CD14-positive monocyte (primary cell): ENCODE measurements at regions of chr1 and their contacts with region 1.

Region 1: GRCh38 chr1:156500797-156501499 is 373 bp upstream of the MEF2D start:
- DNase-seq: peak; percentile 90 to 96 (median 95)
- H3K4me3 ChIP-seq: peak overlapping the region; percentile 55 to 99 (median 96)
- H3K4me3 Mint-ChIP-seq: peak overlapping the region; percentile 93 to 97
- H3K27ac ChIP-seq: peak overlapping the region; percentile 94 to 98
- H3K27ac Mint-ChIP-seq: peak overlapping the region; percentile 95 to 100 (median 99)
- H3K4me1 ChIP-seq: peaks cover 76 to 83% of the 10 kb centered on the region in 2 donors
- H3K4me1 Mint-ChIP-seq: peaks cover 69% of the 10 kb centered on the region
- H3K27me3 ChIP-seq: no peaks in the 10 kb centered on the region
- H3K27me3 Mint-ChIP-seq: no peaks in the 10 kb centered on the region
- CTCF ChIP-seq: peak; percentile 49

Region 2: DNA sequence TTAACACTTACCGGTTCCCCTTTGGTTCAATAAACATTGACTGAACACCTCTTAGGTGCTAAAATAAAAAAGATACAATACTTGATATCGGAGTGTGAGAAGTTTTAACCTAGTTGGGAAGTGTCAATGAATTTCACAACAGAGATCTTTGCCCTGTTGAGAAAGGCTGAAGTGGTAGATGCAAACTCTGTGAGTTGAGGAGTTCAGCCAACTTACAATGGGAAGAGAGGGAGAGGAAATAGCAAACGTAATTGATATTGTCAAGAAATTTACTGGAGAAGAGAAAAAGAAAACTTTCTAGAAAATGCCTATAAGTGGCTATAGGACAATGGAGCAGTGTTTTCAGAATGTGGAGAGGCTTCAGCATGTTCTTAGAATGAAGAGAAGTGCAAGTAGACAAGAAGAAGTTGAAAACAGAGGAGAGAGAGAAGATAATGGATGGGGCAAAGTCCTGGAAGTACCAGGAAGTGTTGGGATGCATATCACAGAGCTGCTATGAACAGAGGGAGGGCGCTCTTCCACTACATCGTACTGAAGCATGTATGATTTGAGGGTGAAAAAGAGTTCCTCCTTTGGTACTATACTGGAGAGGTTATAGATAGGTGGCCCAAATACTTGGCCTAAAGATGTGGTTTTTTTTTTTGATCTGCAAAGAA is 49.3 kb before region 1 on chr1:
- intact Hi-C with region 1: loop called in 1 of 2 experiments (anchors 5 kb)
- DNase-seq: no peak
- H3K4me3 ChIP-seq: no peak overlapping the region
- H3K4me3 Mint-ChIP-seq: no peak overlapping the region
- H3K27ac ChIP-seq: no peak overlapping the region
- H3K27ac Mint-ChIP-seq: peak overlapping the region in 3 of 7 donors; percentile 6 to 69 (median 18)
- H3K4me1 ChIP-seq: peaks cover 33 to 41% of the 10 kb centered on the region in 2 donors
- H3K4me1 Mint-ChIP-seq: peaks cover 37% of the 10 kb centered on the region
- H3K27me3 ChIP-seq: no peaks in the 10 kb centered on the region
- H3K27me3 Mint-ChIP-seq: peaks cover 8 to 17% (median 9%) of the 10 kb centered on the region in 3 donors
- CTCF ChIP-seq: no peak

Region 3: DNA sequence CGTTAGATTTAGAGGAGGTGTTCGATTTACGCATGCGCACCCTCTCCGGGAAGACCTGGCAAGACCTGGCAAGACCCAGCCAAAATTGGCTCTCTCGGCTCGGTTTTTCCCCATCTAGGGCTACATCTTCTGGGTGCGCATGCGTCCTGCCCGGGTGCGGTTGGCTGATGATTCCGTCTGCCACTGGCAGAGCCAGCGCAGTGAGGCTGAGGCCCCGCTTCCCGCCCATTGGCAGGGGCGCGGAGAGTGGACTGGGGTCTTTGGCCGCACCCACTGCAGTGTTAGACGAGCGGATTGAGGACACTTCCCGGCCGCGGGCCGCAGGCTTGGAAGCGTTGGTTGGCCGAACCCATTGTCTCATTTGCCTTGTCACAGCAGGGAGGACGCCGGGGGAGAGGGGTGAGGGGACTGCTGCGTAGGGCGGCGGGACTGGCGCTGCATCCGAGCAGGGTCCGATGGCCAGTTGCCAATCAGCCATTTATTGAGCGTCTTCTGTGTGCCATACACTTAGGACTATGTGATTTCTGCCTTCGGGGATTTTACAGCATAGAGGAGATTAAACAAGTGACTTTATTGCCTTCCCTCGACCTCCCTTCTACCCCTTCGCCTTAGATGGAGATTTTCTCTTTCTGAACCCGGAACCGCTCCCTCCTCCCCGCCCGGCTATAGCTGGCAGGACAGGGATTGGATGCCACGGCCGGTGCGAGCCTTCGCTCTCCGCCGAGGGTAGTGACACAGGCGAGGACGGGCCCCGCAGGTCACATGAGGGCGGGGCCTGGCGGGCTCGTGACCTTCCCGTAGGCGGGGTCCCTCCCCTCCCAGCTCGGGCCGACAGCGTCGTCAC is 44.1 kb before region 1 on chr1:
- intact Hi-C with region 1: loop called in 1 of 2 experiments (anchors 5 kb)
- DNase-seq: peak; percentile 98 to 99 (median 99)
- H3K4me3 ChIP-seq: peak overlapping the region; percentile 63 to 89 (median 78)
- H3K4me3 Mint-ChIP-seq: peak overlapping the region; percentile 85 to 92
- H3K27ac ChIP-seq: peak overlapping the region; percentile 99
- H3K27ac Mint-ChIP-seq: peak overlapping the region; percentile 99 to 100 (median 99)
- H3K4me1 ChIP-seq: peaks cover 37 to 46% of the 10 kb centered on the region in 2 donors
- H3K4me1 Mint-ChIP-seq: peaks cover 45% of the 10 kb centered on the region
- H3K27me3 ChIP-seq: no peaks in the 10 kb centered on the region
- H3K27me3 Mint-ChIP-seq: peaks cover 0 to 4% (median 0%) of the 10 kb centered on the region in 3 donors
- CTCF ChIP-seq: no peak

Region 4: GRCh38 chr1:156480411-156481192 is 20.3 kb before region 1 on chr1:
- intact Hi-C with region 1: loop called in 1 of 2 experiments (anchors 2 kb)
- DNase-seq: peak; percentile 60 to 73 (median 64)
- H3K4me3 ChIP-seq: no peak overlapping the region
- H3K4me3 Mint-ChIP-seq: peak overlapping the region; percentile 35 to 47
- H3K27ac ChIP-seq: peak overlapping the region; percentile 9 to 67
- H3K27ac Mint-ChIP-seq: peak overlapping the region; percentile 82 to 92 (median 89)
- H3K4me1 ChIP-seq: peaks cover 41 to 52% of the 10 kb centered on the region in 2 donors
- H3K4me1 Mint-ChIP-seq: peaks cover 60% of the 10 kb centered on the region
- H3K27me3 ChIP-seq: no peaks in the 10 kb centered on the region
- H3K27me3 Mint-ChIP-seq: peaks cover 0 to 2% (median 1%) of the 10 kb centered on the region in 3 donors
- CTCF ChIP-seq: peak; percentile 85

Region 5: DNA sequence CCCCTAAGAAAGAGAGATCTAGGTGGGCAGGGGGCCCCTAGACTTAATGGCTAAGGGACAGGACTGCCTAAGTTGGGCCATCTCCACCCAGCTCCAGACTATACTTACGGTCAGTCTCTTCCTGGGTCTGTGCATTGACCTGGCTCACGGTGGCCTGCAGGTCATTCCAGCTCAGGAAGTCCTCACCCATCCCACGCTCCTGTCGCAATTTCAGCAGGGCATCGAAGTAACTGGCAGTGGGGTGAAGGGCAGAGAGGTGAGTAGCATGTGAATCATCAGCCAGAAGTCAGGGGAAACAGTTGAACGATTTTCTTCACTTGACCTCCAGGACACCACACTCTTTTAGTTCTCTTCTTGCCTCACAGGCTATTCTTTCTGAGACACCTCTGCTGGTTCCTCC is 50.9 kb after region 1 on chr1:
- intact Hi-C with region 1: loop called (anchors 5 to 10 kb)
- DNase-seq: peak; percentile 74 to 89 (median 83)
- H3K4me3 ChIP-seq: no peak overlapping the region
- H3K4me3 Mint-ChIP-seq: no peak overlapping the region
- H3K27ac ChIP-seq: peak overlapping the region; percentile 3 to 93
- H3K27ac Mint-ChIP-seq: peak overlapping the region; percentile 90 to 97 (median 96)
- H3K4me1 ChIP-seq: peaks cover 41 to 45% of the 10 kb centered on the region in 2 donors
- H3K4me1 Mint-ChIP-seq: peaks cover 55% of the 10 kb centered on the region
- H3K27me3 ChIP-seq: no peaks in the 10 kb centered on the region
- H3K27me3 Mint-ChIP-seq: peaks cover 0 to 2% (median 1%) of the 10 kb centered on the region in 3 donors
- CTCF ChIP-seq: no peak

Region 6: DNA sequence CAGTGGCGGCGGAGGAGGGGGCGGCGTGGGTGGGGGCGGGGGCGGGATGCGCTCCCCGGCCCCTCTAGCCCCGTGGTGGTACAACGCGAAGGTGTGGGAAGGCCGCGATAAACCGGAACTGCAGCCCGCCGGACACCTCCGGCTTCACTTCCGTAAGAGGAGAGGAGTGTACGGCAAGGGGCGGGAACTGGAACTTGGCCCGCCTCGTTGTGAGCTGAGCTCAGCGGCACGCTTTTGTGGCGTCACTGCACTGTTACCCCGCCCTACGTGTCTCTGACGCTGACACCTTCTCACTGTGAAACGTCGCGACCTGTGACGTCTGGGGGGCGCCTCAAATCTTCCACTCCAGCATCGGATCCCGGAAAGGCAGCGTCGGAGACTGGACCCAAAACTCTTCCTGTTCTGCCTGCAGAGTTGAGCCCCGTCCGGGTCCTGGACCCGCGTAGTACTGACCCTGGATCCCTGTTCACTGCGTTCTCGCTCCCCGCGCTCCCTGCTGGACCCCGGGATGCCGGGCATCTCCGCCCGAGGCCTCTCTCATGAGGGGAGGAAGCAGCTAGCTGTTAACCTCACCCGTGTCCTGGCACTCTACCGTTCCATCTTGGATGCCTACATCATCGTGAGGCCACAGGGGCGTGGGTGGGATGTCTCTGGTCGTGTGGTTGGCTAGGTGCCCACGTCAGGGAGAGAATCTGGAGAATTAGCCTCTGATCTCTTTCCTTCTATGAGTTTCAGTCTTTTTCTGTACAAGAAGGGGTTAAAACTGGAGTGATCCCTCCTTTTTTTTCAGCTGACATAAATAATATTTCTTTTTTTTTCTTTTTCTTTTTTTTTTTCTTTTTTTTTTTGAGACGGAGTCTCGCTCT is 227.9 kb after region 1 on chr1 and contains the start of gene ISG20L2:
- intact Hi-C with region 1: loop called in 1 of 2 experiments (anchors 10 kb)
- DNase-seq: peak; percentile 99 to 100 (median 100)
- H3K4me3 ChIP-seq: peak within 1 kb of the TSS; percentile 64 to 94 (median 89)
- H3K4me3 Mint-ChIP-seq: peak within 1 kb of the TSS; percentile 93 to 97
- H3K27ac ChIP-seq: peak within 1 kb of the TSS; percentile 69 to 98
- H3K27ac Mint-ChIP-seq: peak within 1 kb of the TSS in 5 of 7 donors; percentile 72 to 98 (median 98)
- H3K4me1 ChIP-seq: peaks cover 38 to 45% of the 10 kb centered on the region in 2 donors
- H3K4me1 Mint-ChIP-seq: peaks cover 18% of the 10 kb centered on the region
- H3K27me3 ChIP-seq: no peaks in the 10 kb centered on the region
- H3K27me3 Mint-ChIP-seq: no peaks in the 10 kb centered on the region
- CTCF ChIP-seq: no peak
- polyA plus RNA-seq, gene ISG20L2: 17.2 to 23.5 (median 18.1) TPM

Region 7: DNA sequence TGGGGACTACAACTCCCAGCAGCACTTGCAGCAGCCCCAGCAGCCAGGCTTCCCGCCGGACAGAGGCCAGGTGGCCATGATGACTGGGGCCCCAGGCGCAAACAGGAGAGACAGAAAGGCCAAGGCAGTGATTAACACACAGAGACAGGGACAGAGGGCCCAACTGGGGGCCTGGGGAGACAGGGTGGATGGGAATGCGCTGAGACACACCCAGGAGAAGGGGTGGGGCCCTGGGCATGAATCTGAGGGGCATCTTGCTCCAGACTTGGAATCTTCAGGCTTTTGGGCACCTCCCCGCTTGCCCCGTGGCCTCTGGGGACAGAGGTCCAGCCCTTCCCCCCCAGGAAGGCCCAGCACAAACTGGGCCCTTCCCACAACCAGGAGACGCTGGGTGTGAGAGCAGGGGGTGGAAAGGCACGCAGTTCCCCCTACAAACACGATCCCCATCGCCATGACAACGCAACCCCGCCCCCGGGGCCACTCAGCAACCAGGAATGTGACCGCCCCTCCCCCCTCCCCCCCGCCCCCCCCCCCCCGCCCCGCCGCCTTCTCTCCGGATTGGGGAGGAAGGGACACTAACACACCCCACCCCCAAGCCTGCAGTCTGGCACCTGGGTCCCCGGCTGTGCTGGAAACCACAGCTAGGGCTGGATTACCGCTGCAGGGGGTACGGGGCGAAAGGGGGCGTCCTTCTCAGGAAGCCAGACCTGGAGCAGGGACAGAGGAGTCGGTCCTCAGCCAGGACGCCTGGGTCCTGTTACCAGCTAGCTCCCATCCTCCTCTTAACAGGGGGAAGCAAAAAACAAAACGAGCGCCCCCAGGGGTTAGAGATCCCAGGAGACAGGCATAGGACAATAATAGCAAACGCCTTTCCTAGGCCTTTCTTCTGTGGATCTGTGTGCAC is 246.0 kb after region 1 on chr1:
- intact Hi-C with region 1: loop called in 1 of 2 experiments (anchors 5 kb)
- DNase-seq: peak; percentile 62 to 76 (median 64)
- H3K4me3 ChIP-seq: peak overlapping the region; percentile 14 to 84 (median 34)
- H3K4me3 Mint-ChIP-seq: peak overlapping the region; percentile 78 to 97
- H3K27ac ChIP-seq: peak overlapping the region; percentile 89 to 91
- H3K27ac Mint-ChIP-seq: peak overlapping the region; percentile 91 to 98 (median 95)
- H3K4me1 ChIP-seq: peaks cover 52 to 62% of the 10 kb centered on the region in 2 donors
- H3K4me1 Mint-ChIP-seq: peaks cover 57% of the 10 kb centered on the region
- H3K27me3 ChIP-seq: no peaks in the 10 kb centered on the region
- H3K27me3 Mint-ChIP-seq: peaks cover 0 to 3% (median 2%) of the 10 kb centered on the region in 3 donors
- CTCF ChIP-seq: no peak